Dorsolateral prefrontal cortex (tissue), 120 donors: ENCODE measurements at regions of chr16 and their contacts with region 1.

Region 1: GRCh38 chr16:15604460-15605440 is 38.2 kb downstream of the MARF1 start:
- DNase-seq: peak; percentile 35 to 83 (median 65)
- H3K4me3 ChIP-seq: no peak overlapping the region
- H3K27ac ChIP-seq: peak overlapping the region in 53 of 59 donors; percentile 3 to 82 (median 63)
- H3K27me3 ChIP-seq: no peaks in the 10 kb centered on the region
- CTCF ChIP-seq: peak in 3 of 56 donors; percentile 3 to 11 (median 10)

Region 2: DNA sequence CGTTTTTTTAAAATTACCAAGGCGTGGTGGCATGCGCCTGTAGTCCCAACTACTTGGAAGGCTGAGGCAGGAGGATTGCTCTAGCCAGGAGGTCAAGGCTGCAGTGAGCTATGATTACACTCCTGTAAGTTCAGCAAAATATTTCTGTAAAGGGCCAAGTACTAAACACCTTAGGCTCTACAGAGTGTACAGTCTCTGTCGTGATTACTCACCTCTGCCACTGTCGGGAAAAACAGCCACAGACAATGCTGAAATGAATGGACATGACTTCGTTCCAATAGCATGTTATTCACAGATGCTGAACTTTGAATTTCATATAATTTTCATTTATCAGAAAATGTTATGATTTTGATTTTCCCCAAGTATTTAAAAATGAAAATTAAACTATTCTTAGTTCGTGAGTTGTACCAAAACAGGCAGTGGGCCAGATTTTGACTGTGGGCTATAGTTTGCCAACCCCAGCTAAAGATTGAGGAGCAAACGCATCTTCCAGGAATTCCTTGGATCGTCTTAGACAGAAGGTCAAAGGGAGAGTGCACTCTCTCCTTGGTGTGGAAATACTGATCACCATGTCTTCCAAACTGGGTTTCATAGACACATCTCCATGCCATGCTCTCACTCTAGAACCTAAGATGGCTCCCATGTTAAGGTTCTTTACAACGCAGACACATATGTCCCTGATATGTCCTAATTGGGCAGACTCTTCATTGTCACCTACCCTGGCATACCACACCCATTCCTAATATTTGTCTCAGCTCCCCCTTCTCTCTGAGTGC is 51.2 kb before region 1 on chr16:
- intact Hi-C with region 1: loop called in 1 of 2 experiments (anchors 5 kb)
- DNase-seq: no peak
- H3K4me3 ChIP-seq: no peak overlapping the region
- H3K27ac ChIP-seq: peak overlapping the region in 17 of 59 donors; percentile 10 to 96 (median 81)
- H3K27me3 ChIP-seq: no peaks in the 10 kb centered on the region
- CTCF ChIP-seq: no peak